ENCODE measurements at regions of chr2 and their contacts with region 1.

Region 1: DNA sequence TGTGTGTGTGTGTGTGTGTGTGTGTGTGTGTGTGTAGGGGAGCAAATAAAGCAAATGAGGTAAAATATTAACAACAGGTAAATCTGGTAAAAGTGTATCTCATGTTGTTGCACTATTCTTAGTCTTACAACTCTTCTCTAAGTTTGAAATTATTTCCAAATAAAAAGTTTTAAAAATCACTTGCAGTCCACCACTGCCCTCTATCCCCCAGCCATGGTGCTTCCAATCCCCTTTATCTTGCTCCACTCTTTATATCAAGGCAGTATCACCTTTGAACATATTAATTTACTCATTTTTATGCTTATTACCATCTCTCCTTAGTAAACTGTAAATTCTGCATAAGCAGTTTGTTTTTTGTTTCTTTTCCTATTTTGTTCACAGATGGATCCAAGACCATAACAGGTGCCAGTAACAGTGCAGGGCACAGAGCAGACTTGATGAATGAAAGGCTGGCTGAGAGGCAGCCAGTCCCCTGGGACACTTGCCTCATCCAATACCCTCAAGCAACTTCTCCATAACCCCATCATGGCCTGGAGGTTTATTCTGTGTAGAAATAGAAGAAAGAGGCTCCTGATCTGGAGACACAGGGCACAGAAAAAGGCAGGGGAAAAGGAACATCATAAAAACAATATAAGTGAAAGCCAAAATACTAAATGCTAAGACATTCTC is 67.6 kb downstream of the LDAH start:
- DNase-seq: no peak
- ATAC-seq: no peak
- H3K4me3 ChIP-seq: no peak overlapping the region
- H3K27ac ChIP-seq: no peak overlapping the region
- H3K4me1 ChIP-seq: no peaks in the 10 kb centered on the region
- H3K27me3 ChIP-seq: no peaks in the 10 kb centered on the region

Region 2: GRCh38 chr2:20682167-20682920 is 72.9 kb before region 1 on chr2:
- intact Hi-C with region 1: loop called in 1 of 2 experiments (anchors 5 kb)
- DNase-seq: no peak
- ATAC-seq: no peak
- H3K4me3 ChIP-seq: no peak overlapping the region
- H3K27ac ChIP-seq: peak overlapping the region in 1 of 2 donors; percentile 34
- H3K4me1 ChIP-seq: no peaks in the 10 kb centered on the region
- H3K27me3 ChIP-seq: no peaks in the 10 kb centered on the region

Region 3: DNA sequence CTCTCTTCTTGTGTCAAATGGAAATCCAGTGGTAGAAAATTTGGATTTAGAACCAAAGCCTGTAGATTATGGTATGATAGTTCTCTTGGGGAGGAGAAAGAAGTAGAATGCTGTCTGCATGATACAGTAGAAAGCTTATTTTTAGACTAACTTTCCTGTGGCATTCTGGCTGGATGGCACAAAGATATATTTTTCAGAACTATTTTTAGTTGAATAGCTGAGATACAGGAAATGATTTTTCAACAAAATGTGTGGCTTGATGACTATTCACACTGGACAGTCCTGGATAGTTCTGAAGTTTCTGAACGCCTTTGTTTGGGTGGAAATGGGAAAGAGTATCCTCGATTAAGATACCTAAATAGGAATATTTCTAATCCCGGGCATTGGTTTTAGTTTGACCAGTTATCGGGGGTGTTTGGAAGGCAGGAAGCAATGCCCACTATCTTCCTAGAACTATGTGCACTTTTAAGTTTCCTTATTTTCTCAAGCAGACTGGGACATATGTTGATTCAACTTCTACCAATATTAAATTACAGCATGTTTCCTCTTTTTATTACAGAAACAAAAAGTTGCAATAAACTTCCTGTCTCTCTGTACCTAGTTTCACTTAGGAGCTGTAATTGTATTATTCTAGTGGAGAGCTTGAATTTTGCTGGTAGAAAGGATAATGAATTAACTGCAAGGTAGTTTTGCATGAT is 56.2 kb before region 1 on chr2:
- intact Hi-C with region 1: loop called in 1 of 2 experiments (anchors 10 kb)
- DNase-seq: no peak
- ATAC-seq: no peak
- H3K4me3 ChIP-seq: peak overlapping the region; percentile 33 to 88
- H3K27ac ChIP-seq: no peak overlapping the region
- H3K4me1 ChIP-seq: peaks cover 3% of the 10 kb centered on the region in 2 donors
- H3K27me3 ChIP-seq: no peaks in the 10 kb centered on the region

Measured in aorta (tissue), 5 donors.